GM10248 (cell line): ENCODE measurements at regions of chr4 and their contacts with region 1.

Region 1: DNA sequence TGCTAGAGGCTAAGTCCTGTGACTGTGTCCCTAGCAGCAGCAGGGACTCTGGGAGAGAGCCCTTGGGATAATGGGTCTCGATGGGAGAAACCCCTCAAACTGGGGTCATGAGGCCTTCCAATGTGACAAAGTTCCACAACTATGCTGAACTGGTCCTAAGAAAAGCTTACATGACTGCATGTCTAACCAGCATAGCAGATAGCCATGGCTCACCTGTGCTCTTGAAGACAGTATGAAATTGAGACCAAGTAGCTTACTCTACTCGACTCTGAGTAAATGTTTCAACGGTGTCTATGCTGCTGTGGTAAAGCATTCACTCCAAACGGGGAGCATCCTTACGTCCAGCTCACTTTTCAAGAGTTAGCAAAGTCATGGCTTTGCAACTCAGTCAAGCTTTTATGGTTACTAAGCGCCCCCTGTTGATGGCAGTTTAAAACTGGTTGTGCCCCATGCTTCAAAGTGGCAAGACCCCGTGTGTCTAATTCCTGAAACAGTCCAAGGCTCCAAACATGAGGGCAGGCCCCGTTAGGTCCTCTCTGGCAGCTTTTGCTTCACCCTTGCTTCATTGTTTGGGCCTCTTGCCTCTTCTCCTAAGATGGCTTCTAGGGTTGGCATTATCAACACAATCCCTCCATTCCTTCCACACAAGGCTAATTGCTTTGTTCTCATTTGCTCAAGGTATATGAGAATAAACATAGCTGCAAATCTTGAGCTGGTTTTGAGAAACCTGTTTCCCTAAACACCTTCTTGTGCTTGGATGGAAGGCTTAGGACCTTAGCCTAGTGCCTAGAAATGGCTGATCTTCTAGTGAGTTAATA is 46.6 kb downstream of the CCNG2 start:
- DNase-seq: peak; percentile 59
- CTCF ChIP-seq: peak; percentile 80

Region 2: GRCh38 chr4:76498550-76498949 is 705.0 kb before region 1 on chr4:
- CTCF ChIA-PET with region 1: no interaction called
- POLR2A ChIA-PET with region 1: no interaction called
- DNase-seq: no peak
- CTCF ChIP-seq: no peak

Region 3: DNA sequence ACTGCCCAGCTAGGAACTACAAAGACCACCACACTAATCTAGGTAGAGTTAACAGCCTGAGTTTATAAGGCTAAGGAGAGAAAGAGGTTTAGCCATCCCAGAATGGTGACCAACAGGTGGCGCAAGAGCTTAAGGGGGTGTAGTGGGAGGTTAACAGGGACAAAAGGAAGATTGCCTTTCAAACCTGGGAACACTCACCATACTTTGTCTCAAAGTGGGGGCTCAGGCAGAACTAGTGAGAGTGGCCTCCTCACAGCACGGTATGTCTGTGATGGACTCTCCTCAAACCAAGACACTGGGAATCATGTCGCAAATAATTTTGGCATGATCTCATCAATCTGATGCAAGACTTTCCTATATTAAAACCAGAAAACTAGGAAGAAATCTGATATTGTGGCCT is 151.2 kb before region 1 on chr4:
- CTCF ChIA-PET with region 1: interaction called, 72 read pairs
- POLR2A ChIA-PET with region 1: no interaction called
- DNase-seq: no peak
- CTCF ChIP-seq: peak; percentile 51

Region 4: DNA sequence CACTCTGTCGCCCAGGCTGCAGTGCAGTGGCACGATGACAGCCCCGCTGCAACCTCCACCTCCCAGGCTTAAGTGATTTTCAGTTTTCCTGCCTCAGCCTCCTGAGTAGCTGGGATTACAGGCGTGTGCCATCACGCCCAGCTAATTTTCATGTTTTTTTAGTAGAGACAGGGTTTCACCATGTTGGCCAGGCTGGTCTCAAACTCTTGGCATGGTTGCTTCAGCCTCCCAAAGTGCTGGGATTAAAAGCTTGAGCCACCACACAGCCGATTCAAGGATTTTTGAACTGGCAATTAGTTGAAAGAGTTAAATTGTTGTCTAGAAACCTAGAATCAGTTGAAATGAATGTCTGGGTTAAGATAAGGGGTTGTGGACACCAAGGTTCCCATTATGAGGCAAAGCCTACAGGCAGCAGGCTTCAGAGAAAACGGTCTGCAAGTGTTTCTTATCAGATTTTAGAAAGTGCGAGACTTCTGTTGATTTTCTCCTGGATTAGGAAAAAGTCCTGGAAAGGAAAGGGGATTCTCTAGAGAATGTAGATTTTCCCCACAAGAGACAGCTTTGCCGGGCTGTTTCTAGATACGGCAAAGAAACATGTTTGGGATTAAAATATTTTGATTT is 119.5 kb before region 1 on chr4:
- CTCF ChIA-PET with region 1: interaction called, 11 read pairs
- POLR2A ChIA-PET with region 1: no interaction called
- DNase-seq: no peak
- CTCF ChIP-seq: no peak

Region 5: DNA sequence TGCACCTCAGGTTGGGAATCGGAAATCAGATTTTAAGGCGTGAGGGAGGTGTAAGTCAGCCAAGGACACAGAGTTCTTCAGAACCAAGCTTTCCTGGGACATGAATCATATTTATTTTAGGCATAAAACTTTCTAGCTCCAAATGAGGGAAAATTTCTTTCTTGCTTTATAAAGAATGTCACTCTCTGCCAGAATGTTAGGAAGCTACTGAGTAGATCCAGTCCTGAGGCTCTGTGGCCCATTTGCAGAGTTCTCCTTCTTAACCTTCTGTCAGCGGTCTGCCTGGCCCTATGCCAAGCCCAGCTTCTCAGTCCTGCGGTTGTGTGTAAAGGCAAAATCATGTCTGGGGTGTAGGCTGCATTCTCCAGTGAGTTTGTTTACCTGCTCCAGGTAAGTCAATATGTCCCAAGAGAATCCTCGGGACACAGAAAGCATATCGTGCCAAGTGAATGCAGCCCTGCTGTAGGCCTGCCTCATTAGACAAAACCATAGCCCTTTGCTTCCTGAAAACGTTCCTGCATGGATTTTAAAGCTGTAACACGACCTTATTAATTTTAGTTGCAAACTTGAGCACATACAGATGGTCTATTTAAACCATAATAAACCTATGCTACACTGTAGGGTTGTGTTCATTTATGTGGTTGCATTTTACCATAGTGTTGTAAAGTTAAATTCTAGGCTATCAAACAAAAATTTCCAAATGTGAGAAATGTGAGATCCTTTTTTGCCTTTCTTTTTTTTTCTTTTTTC is 98.6 kb before region 1 on chr4:
- CTCF ChIA-PET with region 1: interaction called, 275 read pairs
- POLR2A ChIA-PET with region 1: no interaction called
- DNase-seq: no peak
- CTCF ChIP-seq: no peak

Region 6: DNA sequence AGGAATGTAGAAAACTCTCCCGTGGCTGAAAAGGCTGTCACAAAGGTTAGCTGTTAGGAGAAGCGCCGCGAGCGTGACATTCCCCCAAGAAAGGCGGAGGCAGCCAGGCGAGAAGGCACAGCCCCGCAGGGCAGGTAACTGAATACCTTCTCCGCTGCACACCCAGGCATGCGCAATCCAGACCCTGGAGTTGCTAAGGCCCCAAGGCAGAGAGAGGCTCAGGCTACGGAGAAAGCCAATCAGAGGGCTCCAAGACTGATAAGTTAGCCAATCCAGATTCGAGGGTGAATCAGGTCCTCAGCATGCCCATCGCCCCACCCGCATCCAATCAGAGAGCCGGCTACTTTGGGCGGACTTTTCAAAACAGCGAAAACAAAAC is 47.1 kb before region 1 on chr4:
- CTCF ChIA-PET with region 1: interaction called, 24 read pairs
- POLR2A ChIA-PET with region 1: no interaction called
- DNase-seq: peak; percentile 95
- CTCF ChIP-seq: no peak

Region 7: GRCh38 chr4:77215107-77215506 is 11.5 kb after region 1 on chr4:
- CTCF ChIA-PET with region 1: interaction called, 32 read pairs
- POLR2A ChIA-PET with region 1: no interaction called
- DNase-seq: no peak
- CTCF ChIP-seq: no peak

Region 8: GRCh38 chr4:77465271-77465670 is 261.7 kb after region 1 on chr4:
- CTCF ChIA-PET with region 1: no interaction called
- POLR2A ChIA-PET with region 1: no interaction called
- DNase-seq: peak; percentile 19
- CTCF ChIP-seq: peak; percentile 39

Region 9: DNA sequence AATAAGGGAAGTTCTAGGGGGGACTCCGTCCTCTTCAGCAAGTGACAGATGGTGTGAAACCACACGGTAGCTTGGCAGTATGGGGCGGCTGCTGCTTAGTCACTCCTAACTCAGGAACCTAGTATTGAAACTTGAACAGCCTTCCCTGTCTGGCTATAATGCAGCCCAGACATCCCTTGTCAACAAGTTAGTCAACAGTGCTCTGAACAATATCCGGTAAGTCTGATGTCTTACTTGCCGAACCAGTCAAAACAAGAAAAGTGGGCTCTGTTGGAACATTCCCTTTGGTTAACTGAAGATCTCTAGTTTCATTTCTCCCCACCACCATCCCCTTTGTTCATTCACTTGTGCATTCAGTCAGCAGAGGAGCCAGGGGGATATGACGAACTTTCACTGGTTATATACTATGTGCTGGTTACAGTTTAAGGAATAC is 383.4 kb after region 1 on chr4:
- CTCF ChIA-PET with region 1: no interaction called
- POLR2A ChIA-PET with region 1: no interaction called
- DNase-seq: peak; percentile 57
- CTCF ChIP-seq: no peak

Region 10: DNA sequence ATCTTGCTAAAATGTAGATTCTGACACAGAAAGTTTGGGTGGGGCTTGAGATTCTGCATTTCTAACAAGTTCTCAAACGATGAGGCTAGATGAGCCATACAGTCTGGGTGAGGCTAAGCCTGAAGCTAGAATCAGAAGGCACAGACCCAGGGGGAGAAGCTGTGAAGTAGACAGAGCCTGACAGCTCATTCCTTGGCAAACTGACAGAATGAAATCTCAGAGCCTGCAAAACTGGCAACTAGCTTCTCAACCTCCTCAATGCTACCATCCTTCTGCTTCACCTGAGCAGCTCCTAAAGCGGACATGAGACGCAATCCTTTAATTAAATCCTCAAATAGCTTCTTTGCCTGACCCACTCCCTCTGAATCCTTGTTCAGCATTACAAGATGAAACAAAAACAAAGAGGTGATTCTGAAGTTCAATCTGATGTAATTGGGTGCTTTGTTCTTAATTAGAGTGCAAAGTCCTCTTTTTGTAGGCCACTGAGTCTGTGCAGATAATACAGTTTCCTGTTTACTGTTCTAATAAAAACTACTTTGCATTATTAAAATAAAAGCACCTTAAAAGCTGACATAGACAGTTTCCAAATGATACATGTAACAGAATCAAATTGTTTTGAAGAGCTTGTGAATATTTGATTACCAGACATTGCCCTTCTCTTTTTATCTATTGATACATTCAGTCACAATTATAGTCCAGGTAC is 1501.5 kb after region 1 on chr4:
- CTCF ChIA-PET with region 1: no interaction called
- POLR2A ChIA-PET with region 1: no interaction called
- DNase-seq: no peak
- CTCF ChIP-seq: no peak